ENCODE measurements at regions of chr20 and their contacts with region 1.

Region 1: GRCh38 chr20:23744817-23745216 is 5.9 kb downstream of the CST1 start:
- DNase-seq: no peak
- ATAC-seq: no peak
- H3K4me3 Mint-ChIP-seq: no peak overlapping the region
- H3K27ac Mint-ChIP-seq: no peak overlapping the region
- H3K4me1 Mint-ChIP-seq: no peaks in the 10 kb centered on the region
- H3K27me3 Mint-ChIP-seq: no peaks in the 10 kb centered on the region
- CTCF ChIP-seq: no peak

Region 2: GRCh38 chr20:23820244-23820892 is 75.6 kb after region 1 on chr20:
- CTCF ChIA-PET with region 1: no interaction called
- POLR2A ChIA-PET with region 1: no interaction called
- intact Hi-C with region 1: loop called (anchors 2 kb)
- DNase-seq: no peak
- ATAC-seq: no peak
- H3K4me3 Mint-ChIP-seq: no peak overlapping the region
- H3K27ac Mint-ChIP-seq: no peak overlapping the region
- H3K4me1 Mint-ChIP-seq: no peaks in the 10 kb centered on the region
- H3K27me3 Mint-ChIP-seq: no peaks in the 10 kb centered on the region
- CTCF ChIP-seq: no peak

Region 3: GRCh38 chr20:23988561-23988960 is 243.7 kb after region 1 on chr20 and contains the start of gene GGTLC1:
- CTCF ChIA-PET with region 1: no interaction called
- POLR2A ChIA-PET with region 1: no interaction called
- intact Hi-C with region 1: no loop called
- DNase-seq: no peak
- ATAC-seq: no peak
- H3K4me3 Mint-ChIP-seq: no peak within 1 kb of the TSS
- H3K27ac Mint-ChIP-seq: no peak within 1 kb of the TSS
- H3K4me1 Mint-ChIP-seq: no peaks in the 10 kb centered on the region
- H3K27me3 Mint-ChIP-seq: no peaks in the 10 kb centered on the region
- CTCF ChIP-seq: no peak
- total RNA-seq, gene GGTLC1: not detected in 2 replicates

Measured in activated B cell treated with CpG ODN at 0.5 μM for 24 hours (primary cell).